Activated CD4-positive, alpha-beta memory T cell treated with anti-CD3 and anti-CD28 coated beads, Interleukin-2, amount 10 ng/mL, durations not matched to agents 7 days and 5 days (primary cell): ENCODE measurements at regions of chr3 and their contacts with region 1.

Region 1: DNA sequence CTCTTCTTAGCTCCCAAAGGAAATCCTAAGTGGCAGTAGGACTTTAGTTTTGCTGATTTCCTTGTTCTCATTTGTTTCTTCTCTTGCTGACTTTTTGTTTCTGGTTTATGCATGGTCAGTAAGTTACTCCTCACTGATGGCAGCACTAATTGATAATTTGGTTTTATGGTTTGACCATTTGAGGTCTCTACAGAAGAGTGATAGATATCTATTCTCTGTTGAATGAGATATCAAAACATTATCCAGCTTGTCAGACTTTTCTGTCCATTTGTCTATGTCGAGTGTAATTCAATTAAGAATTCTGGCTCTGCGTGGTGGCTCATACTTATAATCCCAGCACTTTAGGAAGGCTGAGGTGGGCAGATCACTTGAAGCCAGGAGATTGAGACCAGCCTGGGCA is 84.5 kb upstream of the PLXND1 start:
- DNase-seq: no peak
- H3K4me3 Mint-ChIP-seq: no peak overlapping the region
- H3K27ac Mint-ChIP-seq: no peak overlapping the region
- H3K4me1 Mint-ChIP-seq: peaks cover 2% of the 10 kb centered on the region
- H3K27me3 Mint-ChIP-seq: no peaks in the 10 kb centered on the region

Region 2: DNA sequence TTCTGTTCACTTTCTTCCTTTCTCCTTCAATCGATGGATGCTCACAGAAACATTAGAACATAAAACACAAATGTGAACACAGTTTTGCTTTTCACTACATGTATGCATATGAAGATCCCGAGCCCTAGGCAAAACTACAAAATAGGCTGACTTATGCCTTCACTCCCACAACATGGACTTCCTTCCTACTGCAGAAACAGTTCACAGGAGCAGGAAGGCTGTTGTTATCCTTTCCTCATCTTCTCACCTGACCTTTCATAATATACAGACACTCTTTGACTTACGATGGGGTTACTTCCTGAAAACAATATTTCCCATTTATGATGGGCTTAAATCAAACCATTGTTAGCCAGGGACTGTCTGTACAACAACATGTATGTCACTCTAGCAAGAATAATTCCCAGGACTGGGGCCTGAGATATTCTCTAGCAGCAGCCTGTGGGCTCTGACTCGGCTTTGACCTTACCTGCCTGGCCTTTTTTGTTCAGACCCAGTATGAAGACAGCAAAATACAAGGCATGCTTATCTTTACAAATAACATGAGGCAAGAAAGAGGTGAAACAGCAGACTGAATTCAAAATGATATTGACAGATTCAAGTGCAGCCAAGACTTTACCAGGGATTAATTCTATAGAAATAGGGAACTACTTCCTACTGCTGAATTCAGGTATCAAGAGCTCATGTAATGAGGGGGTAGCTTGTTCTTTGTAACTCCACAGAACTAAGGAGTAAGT is 32.7 kb before region 1 on chr3:
- CTCF ChIA-PET with region 1: interaction called, 10 read pairs
- POLR2A ChIA-PET with region 1: no interaction called
- DNase-seq: no peak
- H3K4me3 Mint-ChIP-seq: no peak overlapping the region
- H3K27ac Mint-ChIP-seq: no peak overlapping the region
- H3K4me1 Mint-ChIP-seq: peaks cover 18% of the 10 kb centered on the region
- H3K27me3 Mint-ChIP-seq: no peaks in the 10 kb centered on the region

Region 3: DNA sequence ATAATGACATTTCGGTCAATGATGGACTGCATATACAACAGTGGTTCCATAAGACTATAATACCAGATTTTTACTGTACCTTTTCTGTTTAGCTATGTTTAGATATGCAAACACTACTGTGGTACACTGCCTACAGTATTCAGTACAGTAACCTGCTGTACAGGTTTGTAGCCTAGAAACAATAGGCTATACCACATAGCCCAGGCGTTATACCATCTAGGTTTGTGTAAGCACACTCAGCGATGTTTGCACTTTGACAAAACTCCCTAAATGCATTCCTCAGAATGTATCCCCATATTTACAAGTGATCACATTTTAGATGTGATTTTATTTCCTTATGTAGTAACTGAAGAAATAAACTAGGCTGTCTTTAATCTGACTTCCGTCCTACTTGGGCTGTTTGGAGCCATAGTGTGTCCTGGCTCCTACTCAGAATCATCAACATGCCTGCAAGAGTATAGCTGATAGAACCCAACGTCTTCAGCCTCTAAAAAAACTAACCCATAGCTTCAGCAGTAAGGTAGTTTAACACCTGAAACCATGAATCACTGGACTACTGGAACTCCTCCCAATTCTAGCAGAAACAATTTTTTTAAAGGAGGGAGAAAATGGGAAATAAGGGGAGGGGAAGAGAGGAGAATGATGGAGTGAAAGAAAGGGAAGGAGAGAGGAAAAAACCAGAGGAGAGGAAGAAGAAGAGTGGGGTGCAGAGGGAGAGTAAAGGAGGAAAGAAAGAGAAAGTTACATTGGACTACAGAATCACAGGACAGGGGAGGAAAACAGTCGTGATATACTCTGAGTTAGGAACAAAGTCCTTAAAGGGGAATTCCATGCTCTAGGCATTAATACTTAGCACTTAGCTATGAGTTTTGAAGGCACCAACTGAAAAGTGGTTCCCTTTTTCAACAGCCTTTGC is 16.8 kb before region 1 on chr3:
- CTCF ChIA-PET with region 1: no interaction called
- POLR2A ChIA-PET with region 1: no interaction called
- DNase-seq: no peak
- H3K4me3 Mint-ChIP-seq: no peak overlapping the region
- H3K27ac Mint-ChIP-seq: no peak overlapping the region
- H3K4me1 Mint-ChIP-seq: no peaks in the 10 kb centered on the region
- H3K27me3 Mint-ChIP-seq: no peaks in the 10 kb centered on the region